Left cardiac atrium (tissue), 4 donors: ENCODE measurements at regions of chr3 and their contacts with region 1.

Region 1: DNA sequence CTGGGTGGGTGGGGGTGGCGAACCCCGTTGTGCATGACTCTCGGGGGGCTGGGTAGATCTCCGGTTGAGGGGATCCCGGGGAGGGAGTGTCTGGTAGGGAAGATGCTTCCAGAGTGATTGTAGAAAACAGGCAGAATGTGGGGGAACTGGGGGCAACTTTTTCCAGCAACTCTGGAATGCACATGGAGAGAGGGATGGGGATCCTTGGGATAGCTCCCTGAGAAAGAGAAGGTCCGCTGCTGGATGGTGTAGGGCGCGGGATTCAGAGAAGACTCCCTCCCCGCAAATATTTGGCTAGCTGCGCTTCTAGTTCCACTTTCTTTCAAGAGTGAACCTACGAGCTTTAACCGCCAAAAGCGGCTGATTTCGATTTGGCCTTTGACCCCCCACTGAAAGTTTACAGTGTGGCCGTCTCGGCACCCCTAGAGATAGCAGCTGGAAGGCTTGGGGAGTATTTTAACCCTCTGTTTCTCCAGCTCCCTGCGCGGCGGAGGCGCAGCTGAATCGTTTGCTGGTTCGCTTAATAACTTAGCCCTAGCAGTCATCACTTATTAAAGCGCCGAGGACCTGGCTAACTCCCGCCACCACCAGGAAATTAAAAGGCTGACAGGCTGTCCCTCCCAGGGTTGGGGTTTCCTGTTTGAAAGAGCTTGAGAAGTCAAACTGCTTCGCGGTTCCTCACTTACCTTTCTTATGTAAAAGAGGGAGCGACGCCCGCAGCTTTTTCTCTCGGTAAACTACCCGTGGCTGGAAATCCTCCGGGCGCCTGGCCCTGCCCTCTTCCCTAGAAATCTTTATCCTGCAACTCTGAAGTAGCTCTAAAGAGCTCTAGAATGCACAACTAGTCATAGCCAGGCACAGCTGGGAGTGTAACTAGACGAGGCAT is 1.2 kb downstream of the PHLDB2 start:
- DNase-seq: peak; percentile 76
- ATAC-seq: peak; percentile 79 to 80

Region 2: GRCh38 chr3:111717601-111718000 is 142.6 kb before region 1 on chr3:
- intact Hi-C with region 1: loop called (anchors 1 to 10 kb)
- DNase-seq: peak; percentile 76
- ATAC-seq: peak; percentile 92 to 93

Region 3: GRCh38 chr3:111723293-111724215 is 136.7 kb before region 1 on chr3:
- intact Hi-C with region 1: loop called in 1 of 2 experiments (anchors 10 kb)
- DNase-seq: no peak
- ATAC-seq: peak in 1 of 2 donors; percentile 73

Region 4: DNA sequence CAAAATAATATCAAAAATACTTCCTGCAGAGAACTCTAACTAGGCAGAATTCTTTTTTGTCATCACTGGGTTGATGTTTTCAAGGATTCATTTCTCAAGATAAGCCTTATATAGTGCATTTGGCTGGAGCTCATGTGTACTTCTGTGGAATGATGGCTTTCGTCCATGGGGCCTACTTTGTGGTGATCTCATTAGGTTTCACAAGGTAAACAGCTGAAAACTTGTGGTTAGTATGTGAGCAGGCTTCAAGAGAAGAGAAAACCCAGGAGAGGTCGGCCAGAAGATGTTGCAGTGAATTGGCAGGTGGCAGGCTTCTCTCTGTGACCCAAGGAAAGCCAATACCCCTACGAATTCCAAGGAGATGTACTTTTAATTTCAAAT is 122.5 kb before region 1 on chr3:
- intact Hi-C with region 1: loop called in 1 of 2 experiments (anchors 5 kb)
- DNase-seq: peak; percentile 29
- ATAC-seq: peak; percentile 86 to 88

Region 5: GRCh38 chr3:111803123-111803593 is 57.1 kb before region 1 on chr3:
- intact Hi-C with region 1: loop called in 1 of 2 experiments (anchors 10 kb)
- DNase-seq: peak; percentile 80
- ATAC-seq: peak; percentile 84 to 92

Region 6: GRCh38 chr3:111910806-111911205 is 50.6 kb after region 1 on chr3:
- intact Hi-C with region 1: loop called in 1 of 2 experiments (anchors 5 kb)
- DNase-seq: no peak
- ATAC-seq: peak; percentile 81 to 82

Region 7: DNA sequence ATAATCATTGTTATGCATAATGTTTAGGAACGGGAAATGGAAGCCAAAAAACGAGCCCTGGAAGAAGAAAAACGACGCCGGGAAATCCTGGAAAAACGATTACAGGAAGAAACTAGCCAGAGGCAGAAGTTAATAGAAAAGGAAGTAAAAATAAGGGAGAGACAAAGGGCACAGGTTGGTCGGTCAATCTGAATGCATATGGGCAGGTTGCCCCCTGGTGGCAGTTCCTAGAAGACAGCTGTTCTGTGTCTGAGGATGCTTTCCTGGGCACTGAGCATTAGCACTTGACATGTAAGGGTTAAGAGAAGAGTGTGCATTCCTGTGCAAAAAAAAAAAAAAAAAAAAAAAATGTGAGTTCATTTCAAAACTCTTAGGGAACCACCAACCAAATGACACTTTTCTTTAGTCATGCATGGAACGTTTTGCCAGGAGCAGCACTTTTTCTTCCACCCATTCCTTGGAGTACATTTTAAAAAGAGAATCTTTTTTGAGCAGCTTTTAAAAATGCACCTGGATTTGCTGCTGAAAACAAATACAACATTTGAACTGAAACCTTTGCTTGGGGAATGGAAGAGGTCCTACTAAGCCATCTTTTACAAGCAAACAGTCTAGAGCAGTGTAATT is 107.5 kb after region 1 on chr3:
- intact Hi-C with region 1: loop called (anchors 2 to 10 kb)
- DNase-seq: peak; percentile 85
- ATAC-seq: peak; percentile 81 to 94